ENCODE measurements at regions of chrX and their contacts with region 1.

Region 1: DNA sequence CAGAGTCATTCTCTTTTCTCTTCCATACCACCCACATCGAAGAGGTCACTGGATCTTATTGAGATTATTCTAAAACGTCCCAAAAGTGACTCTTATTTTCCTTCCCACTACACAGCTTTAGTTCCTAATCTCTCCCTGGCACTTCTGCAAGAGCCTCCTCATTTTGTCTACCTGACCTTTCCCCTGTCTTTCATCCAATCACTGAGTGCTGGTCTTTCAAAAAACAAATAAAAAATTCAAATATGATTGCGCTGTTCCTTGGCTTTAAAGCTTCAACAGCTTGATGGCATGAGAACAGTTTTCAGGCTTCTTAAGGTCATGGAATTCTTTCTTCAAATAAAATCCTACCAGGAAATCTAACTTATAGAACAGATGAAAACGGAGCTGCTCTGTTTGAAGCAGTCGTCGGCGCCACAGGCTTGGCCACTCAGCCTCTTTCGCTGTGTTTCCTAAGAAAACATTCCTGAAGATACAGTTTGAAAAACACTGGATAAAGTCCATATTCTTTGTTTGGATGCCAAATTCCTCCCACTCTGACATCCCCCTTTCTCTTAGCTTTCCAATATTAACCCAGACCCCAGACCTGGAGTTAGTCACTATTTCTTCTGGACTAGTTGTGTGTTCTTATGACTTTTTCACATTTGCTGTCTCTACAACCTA is 12.5 kb downstream of the SYTL5 start:
- DNase-seq: peak; percentile 33 to 49
- H3K4me3 ChIP-seq: no peak overlapping the region
- H3K4me3 Mint-ChIP-seq: peak overlapping the region; percentile 64
- H3K27ac Mint-ChIP-seq: peak overlapping the region; percentile 87
- H3K4me1 ChIP-seq: peaks cover 24% of the 10 kb centered on the region
- H3K4me1 Mint-ChIP-seq: peaks cover 36% of the 10 kb centered on the region
- H3K27me3 ChIP-seq: no peaks in the 10 kb centered on the region
- H3K27me3 Mint-ChIP-seq: no peaks in the 10 kb centered on the region
- CTCF ChIP-seq: no peak

Region 2: GRCh38 chrX:37926700-37927099 is 92.2 kb before region 1 on chrX:
- CTCF ChIA-PET with region 1: no interaction called
- POLR2A ChIA-PET with region 1: no interaction called
- intact Hi-C with region 1: loop called (anchors 5 kb)
- DNase-seq: peak in 1 of 2 experiments; percentile 13
- H3K4me3 ChIP-seq: no peak overlapping the region
- H3K4me3 Mint-ChIP-seq: peak overlapping the region; percentile 6
- H3K27ac Mint-ChIP-seq: peak overlapping the region; percentile 34
- H3K4me1 ChIP-seq: no peaks in the 10 kb centered on the region
- H3K4me1 Mint-ChIP-seq: peaks cover 12% of the 10 kb centered on the region
- H3K27me3 ChIP-seq: no peaks in the 10 kb centered on the region
- H3K27me3 Mint-ChIP-seq: no peaks in the 10 kb centered on the region
- CTCF ChIP-seq: peak; percentile 31 to 36

Region 3: GRCh38 chrX:37958525-37959211 is 60.2 kb before region 1 on chrX:
- CTCF ChIA-PET with region 1: interaction called, 4 read pairs
- POLR2A ChIA-PET with region 1: no interaction called
- intact Hi-C with region 1: loop called (anchors 2 kb)
- DNase-seq: peak; percentile 46 to 60
- H3K4me3 ChIP-seq: no peak overlapping the region
- H3K4me3 Mint-ChIP-seq: peak overlapping the region; percentile 52
- H3K27ac Mint-ChIP-seq: peak overlapping the region; percentile 66
- H3K4me1 ChIP-seq: peaks cover 21% of the 10 kb centered on the region
- H3K4me1 Mint-ChIP-seq: peaks cover 22% of the 10 kb centered on the region
- H3K27me3 ChIP-seq: no peaks in the 10 kb centered on the region
- H3K27me3 Mint-ChIP-seq: no peaks in the 10 kb centered on the region
- CTCF ChIP-seq: no peak

Region 4: DNA sequence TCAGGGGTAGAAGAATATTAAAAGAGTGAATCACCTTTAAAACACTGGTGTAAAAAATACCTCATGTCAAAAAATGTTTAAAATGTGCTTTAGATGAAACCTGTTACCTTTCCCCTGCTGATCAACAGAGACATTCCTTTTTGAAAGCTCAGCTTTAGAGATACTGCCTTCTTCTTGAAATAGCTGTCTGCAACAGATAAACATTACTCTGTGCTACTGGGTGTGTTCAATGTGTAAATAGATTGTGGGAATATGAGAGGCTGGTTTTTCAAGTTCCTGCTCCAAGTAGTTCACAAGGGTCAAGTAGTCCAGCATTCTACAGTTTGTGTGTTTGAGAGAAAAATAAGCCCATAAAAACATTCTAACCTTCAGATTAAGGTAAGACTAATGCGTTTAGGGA is 12.6 kb before region 1 on chrX and contains the start of gene SYTL5:
- CTCF ChIA-PET with region 1: no interaction called
- POLR2A ChIA-PET with region 1: interaction called, 3 read pairs
- intact Hi-C with region 1: loop called (anchors 1 kb)
- DNase-seq: peak in 1 of 2 experiments; percentile 53
- H3K4me3 ChIP-seq: peak within 1 kb of the TSS; percentile 25
- H3K4me3 Mint-ChIP-seq: peak within 1 kb of the TSS; percentile 74
- H3K27ac Mint-ChIP-seq: peak within 1 kb of the TSS; percentile 90
- H3K4me1 ChIP-seq: peaks cover 33% of the 10 kb centered on the region
- H3K4me1 Mint-ChIP-seq: peaks cover 19% of the 10 kb centered on the region
- H3K27me3 ChIP-seq: no peaks in the 10 kb centered on the region
- H3K27me3 Mint-ChIP-seq: no peaks in the 10 kb centered on the region
- CTCF ChIP-seq: no peak
- total RNA-seq, gene SYTL5: 8.8 and 8.9 TPM in 2 replicates

Region 5: DNA sequence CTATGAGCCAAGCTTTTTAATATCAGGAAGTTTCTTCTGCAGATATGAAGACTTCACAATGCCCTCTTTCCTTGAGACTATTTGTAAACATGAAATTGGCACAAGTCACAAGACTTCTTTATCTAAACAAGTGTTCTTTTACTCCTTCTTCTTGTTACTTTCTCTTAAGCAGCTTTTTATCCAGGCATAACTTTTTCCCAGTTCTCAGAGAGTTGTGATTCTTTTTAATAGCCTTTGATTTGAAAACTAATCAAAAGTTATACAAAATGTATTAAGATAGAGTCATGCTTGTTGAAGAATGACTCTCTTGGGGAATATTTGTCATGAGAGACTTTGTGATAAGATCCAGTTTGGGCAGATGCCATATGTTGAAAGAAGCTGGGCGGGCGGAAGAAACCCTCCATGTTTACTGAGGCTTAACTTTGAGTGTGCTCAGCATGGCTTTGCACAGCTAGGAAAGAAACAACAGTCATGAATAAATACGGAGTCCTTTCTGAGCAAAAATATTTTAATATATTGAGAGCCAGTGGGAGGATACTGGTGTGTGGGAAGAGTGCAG is 26.7 kb after region 1 on chrX:
- CTCF ChIA-PET with region 1: no interaction called
- POLR2A ChIA-PET with region 1: no interaction called
- intact Hi-C with region 1: loop called (anchors 2 kb)
- DNase-seq: peak; percentile 50 to 54
- H3K4me3 ChIP-seq: no peak overlapping the region
- H3K4me3 Mint-ChIP-seq: no peak overlapping the region
- H3K27ac Mint-ChIP-seq: peak overlapping the region; percentile 67
- H3K4me1 ChIP-seq: peaks cover 19% of the 10 kb centered on the region
- H3K4me1 Mint-ChIP-seq: peaks cover 20% of the 10 kb centered on the region
- H3K27me3 ChIP-seq: no peaks in the 10 kb centered on the region
- H3K27me3 Mint-ChIP-seq: no peaks in the 10 kb centered on the region
- CTCF ChIP-seq: no peak

Region 6: GRCh38 chrX:38061335-38061734 is 42.4 kb after region 1 on chrX:
- CTCF ChIA-PET with region 1: no interaction called
- POLR2A ChIA-PET with region 1: no interaction called
- intact Hi-C with region 1: loop called (anchors 5 kb)
- DNase-seq: peak in 1 of 2 experiments; percentile 2
- H3K4me3 ChIP-seq: no peak overlapping the region
- H3K4me3 Mint-ChIP-seq: no peak overlapping the region
- H3K27ac Mint-ChIP-seq: no peak overlapping the region
- H3K4me1 ChIP-seq: peaks cover 10% of the 10 kb centered on the region; the same call in 1 of the 2 replicates
- H3K4me1 Mint-ChIP-seq: no peaks in the 10 kb centered on the region
- H3K27me3 ChIP-seq: no peaks in the 10 kb centered on the region
- H3K27me3 Mint-ChIP-seq: no peaks in the 10 kb centered on the region
- CTCF ChIP-seq: no peak

Measured in Caco-2 (cell line).